Activated CD4-positive, alpha-beta T cell treated with anti-CD3 and anti-CD28 coated beads, Interleukin-2, amount 10 ng/mL, durations not matched to agents 24 days and 14 days (primary cell): ENCODE measurements at regions of chr18 and their contacts with region 1.

Region 1: GRCh38 chr18:54828281-54828881 is at the start of gene RAB27B:
- DNase-seq: peak; percentile 88
- H3K4me3 Mint-ChIP-seq: peak within 1 kb of the TSS; percentile 80
- H3K27ac Mint-ChIP-seq: peak within 1 kb of the TSS; percentile 19
- H3K4me1 Mint-ChIP-seq: peaks cover 15% of the 10 kb centered on the region
- H3K27me3 Mint-ChIP-seq: peaks cover 35% of the 10 kb centered on the region
- total RNA-seq, gene RAB27B: 0.33 and 0.45 TPM in 2 replicates

Region 2: GRCh38 chr18:54717673-54718407 is 110.5 kb before region 1 on chr18:
- intact Hi-C with region 1: loop called (anchors 5 kb)
- DNase-seq: peak; percentile 88
- H3K4me3 Mint-ChIP-seq: peak overlapping the region; percentile 77
- H3K27ac Mint-ChIP-seq: peak overlapping the region; percentile 15
- H3K4me1 Mint-ChIP-seq: peaks cover 48% of the 10 kb centered on the region
- H3K27me3 Mint-ChIP-seq: peaks cover 29% of the 10 kb centered on the region

Region 3: GRCh38 chr18:54787616-54788015 is 40.8 kb before region 1 on chr18:
- intact Hi-C with region 1: no loop called
- DNase-seq: no peak
- H3K4me3 Mint-ChIP-seq: no peak overlapping the region
- H3K27ac Mint-ChIP-seq: no peak overlapping the region
- H3K4me1 Mint-ChIP-seq: peaks cover 3% of the 10 kb centered on the region
- H3K27me3 Mint-ChIP-seq: peaks cover 10% of the 10 kb centered on the region

Region 4: DNA sequence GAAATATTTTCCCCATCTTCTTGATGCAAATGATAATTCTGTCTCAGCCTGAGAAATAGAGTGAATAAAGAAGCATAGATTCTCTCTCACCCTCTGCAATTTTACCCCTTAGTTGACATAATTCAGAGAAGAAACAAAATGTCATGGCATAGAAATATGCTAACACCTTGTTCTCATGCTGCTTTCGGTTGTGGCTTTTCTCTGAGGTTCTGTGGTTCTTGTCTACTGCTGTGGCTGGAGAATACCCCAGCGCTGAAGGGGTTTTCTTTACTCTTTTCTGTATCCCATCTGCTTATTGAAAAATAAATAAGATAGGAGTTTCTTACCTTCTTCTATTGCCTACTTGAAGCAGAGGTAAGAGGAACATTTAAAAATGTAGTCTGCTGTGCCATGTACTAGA is 15.5 kb before region 1 on chr18:
- intact Hi-C with region 1: loop called (anchors 2 kb)
- DNase-seq: peak; percentile 83
- H3K4me3 Mint-ChIP-seq: no peak overlapping the region
- H3K27ac Mint-ChIP-seq: no peak overlapping the region
- H3K4me1 Mint-ChIP-seq: peaks cover 14% of the 10 kb centered on the region
- H3K27me3 Mint-ChIP-seq: peaks cover 35% of the 10 kb centered on the region